ENCODE measurements at regions of chr2 and their contacts with region 1.

Region 1: GRCh38 chr2:12923907-12924610 is 207.3 kb downstream of the TRIB2 start:
- DNase-seq: no peak
- H3K4me3 ChIP-seq: no peak overlapping the region
- H3K27ac ChIP-seq: no peak overlapping the region
- H3K4me1 ChIP-seq: peaks cover 8 to 15% (median 9%) of the 10 kb centered on the region in 4 donors
- H3K27me3 ChIP-seq: no peaks in the 10 kb centered on the region
- CTCF ChIP-seq: no peak
- EP300 ChIP-seq: no peak
- POLR2A ChIP-seq: no peak

Region 2: GRCh38 chr2:12819103-12819475 is 105.0 kb before region 1 on chr2:
- intact Hi-C with region 1: loop called (anchors 5 kb)
- DNase-seq: peak; percentile 94
- H3K4me3 ChIP-seq: no peak overlapping the region
- H3K27ac ChIP-seq: peak overlapping the region; percentile 66 to 81 (median 74)
- H3K4me1 ChIP-seq: peaks cover 25 to 49% (median 32%) of the 10 kb centered on the region in 4 donors
- H3K27me3 ChIP-seq: no peaks in the 10 kb centered on the region
- CTCF ChIP-seq: no peak
- EP300 ChIP-seq: peak; percentile 62
- POLR2A ChIP-seq: no peak

Measured in esophagus muscularis mucosa (tissue), 4 donors.